Left cardiac atrium (tissue), 4 donors: ENCODE measurements at regions of chr1 and their contacts with region 1.

Region 1: DNA sequence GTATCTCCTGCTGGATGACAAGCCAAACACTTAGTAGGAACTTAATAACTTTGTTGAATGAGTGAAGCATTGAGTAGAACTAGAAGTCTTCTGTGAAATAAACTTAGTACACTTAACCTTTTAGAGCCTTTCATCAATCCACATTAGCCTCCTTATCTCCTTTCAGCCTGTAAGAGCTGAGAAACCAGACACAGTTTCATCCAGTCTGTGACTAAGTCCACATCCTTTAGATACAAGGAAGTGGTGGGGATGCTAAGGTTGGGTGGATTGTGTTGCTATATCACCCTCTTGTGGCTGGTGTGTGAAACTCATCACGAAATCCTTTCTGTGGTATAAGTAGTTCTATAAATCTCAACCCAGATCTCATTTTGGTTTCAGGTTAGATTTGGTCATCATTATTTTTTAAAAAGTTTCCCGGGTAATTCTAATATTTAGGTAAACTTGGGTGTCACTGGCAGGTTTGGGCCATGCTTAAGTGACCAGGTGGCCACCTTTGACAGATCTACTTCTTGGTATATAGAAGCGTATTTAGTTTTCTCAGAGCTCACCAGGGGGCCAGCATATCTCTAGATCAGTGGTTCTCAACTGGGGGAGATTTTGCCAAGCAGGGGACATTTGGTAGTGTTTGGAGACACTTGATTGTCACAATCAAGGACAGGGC is 27.8 kb upstream of the CD84 start:
- DNase-seq: no peak
- ATAC-seq: peak; percentile 82 to 93

Region 2: GRCh38 chr1:160428655-160429054 is 178.5 kb before region 1 on chr1:
- intact Hi-C with region 1: loop called (anchors 1 to 5 kb)
- DNase-seq: peak; percentile 58
- ATAC-seq: peak; percentile 70 to 83

Region 3: DNA sequence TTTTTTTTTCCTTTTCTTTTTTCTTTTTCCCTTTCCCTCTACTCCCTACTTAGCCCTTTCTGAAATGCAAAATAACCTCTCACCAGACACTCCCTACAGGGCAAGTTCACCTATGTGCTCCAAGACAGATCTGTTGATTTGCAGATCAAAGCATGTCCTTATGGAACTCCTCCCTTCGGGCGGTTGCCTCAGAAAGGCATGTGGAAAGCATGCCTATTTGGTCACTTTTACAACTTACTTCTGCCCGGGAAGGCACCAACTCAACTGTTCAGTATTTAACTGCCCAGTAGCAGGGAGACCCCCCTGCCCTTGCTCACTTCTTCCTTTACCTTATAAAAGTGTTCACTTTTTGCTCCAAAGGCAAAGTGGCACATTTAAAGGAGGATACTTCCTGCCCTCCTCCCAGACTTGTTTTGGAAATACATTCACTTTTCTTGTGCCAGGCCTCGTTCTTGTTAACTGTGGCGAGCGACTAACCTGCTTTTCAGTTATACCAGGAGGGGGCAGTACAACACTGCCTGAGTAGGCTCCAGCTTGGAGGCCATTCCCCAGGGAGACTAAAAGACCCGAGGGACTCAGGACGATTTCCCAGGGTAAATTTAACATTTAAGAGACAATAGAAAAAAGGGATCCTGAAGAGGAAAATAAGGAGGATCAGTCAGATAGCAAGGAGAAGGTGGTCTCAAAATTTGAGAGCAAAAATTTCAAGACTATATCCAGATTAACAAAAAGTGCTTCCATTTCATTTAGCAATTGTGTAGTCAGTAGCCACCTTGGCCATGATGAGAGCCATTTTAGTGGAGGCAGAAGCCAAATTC is 119.6 kb after region 1 on chr1:
- intact Hi-C with region 1: no loop called
- DNase-seq: peak; percentile 49
- ATAC-seq: peak; percentile 83 to 93

Region 4: GRCh38 chr1:161351482-161351881 is 744.3 kb after region 1 on chr1:
- intact Hi-C with region 1: no loop called
- DNase-seq: no peak
- ATAC-seq: no peak